Vagina (tissue), 2 donors: ENCODE measurements at regions of chr9 and their contacts with region 1.

Region 1: GRCh38 chr9:36759141-36759540 is 186.4 kb downstream of the MELK start:
- DNase-seq: no peak
- H3K4me3 ChIP-seq: no peak overlapping the region
- H3K27ac ChIP-seq: no peak overlapping the region
- H3K4me1 ChIP-seq: no peaks in the 10 kb centered on the region
- H3K27me3 ChIP-seq: no peaks in the 10 kb centered on the region
- CTCF ChIP-seq: no peak
- POLR2A ChIP-seq: no peak

Region 2: GRCh38 chr9:36742264-36742663 is 16.9 kb before region 1 on chr9:
- intact Hi-C with region 1: loop called (anchors 2 kb)
- DNase-seq: no peak
- H3K4me3 ChIP-seq: no peak overlapping the region
- H3K27ac ChIP-seq: no peak overlapping the region
- H3K4me1 ChIP-seq: no peaks in the 10 kb centered on the region
- H3K27me3 ChIP-seq: no peaks in the 10 kb centered on the region
- CTCF ChIP-seq: no peak
- POLR2A ChIP-seq: no peak

Region 3: DNA sequence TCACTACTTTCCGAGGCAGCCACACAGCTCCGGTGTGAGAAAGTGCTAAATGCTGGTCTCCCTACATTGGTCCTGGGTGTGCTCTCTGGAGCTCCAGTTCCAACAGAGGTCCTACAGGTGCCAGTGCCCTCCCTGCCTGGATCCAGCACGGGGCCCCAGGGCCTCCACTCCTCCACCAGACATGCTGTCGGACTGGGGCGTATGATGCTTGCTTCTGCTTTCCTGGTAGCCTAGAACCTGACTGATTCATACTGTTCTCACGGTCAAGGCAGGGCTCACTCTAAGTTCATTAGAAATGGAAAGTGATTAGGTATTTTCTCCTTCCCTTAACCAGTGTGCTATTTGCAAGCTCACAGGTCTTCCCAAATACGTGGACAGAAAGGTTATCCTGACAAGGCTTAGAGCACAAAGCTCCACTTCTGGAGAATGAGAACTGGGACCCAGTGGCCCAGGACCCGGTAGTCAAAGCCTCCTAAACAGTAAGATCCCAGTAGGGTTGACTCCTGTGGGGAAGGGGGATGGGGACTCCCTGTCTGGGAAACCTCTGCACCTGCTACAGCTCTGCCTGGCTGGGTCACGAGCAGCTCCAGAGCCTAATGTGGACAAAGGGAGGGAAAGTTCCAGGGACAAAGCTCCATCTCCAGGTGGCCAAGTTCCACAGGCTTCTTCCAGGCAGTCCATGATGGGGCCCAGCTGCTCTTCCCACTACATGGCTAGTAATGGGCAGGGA is 176.8 kb after region 1 on chr9:
- intact Hi-C with region 1: no loop called
- DNase-seq: peak; percentile 67 to 77
- H3K4me3 ChIP-seq: no peak overlapping the region
- H3K27ac ChIP-seq: no peak overlapping the region
- H3K4me1 ChIP-seq: no peaks in the 10 kb centered on the region
- H3K27me3 ChIP-seq: no peaks in the 10 kb centered on the region
- CTCF ChIP-seq: no peak
- POLR2A ChIP-seq: no peak